ENCODE measurements at regions of chr4 and their contacts with region 1.

Region 1: DNA sequence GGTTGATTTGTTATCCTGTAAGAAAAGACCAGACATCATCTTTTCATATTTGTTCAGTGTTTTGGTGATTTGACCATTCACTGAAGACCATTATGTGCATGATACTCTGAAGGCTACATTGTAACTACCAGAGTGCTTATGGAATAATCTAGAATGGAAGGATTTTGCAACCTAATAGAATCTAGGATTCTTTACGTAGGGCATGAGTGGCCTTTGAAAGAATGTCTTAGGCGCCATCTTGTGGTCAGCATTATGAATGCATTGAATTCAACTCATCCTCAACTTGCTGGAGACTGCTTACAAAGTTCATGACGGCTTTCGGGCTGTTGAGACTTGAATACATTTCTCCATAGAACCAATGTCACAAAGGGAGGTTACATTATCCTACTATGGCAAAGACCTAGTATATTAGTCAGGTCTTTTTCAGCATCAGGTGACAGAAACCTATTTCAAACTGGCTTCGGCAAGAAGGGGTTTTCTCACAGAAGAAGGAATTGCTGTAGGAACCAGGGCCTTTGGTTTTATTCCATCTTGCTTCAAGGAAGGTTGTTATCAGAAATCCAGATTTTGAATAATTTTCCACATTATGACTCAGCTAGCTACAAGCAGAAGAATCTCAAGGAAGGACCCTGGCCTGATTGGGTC is 104.1 kb downstream of the GPAT3 start:
- DNase-seq: peak; percentile 78
- H3K4me3 ChIP-seq: no peak overlapping the region
- H3K27ac ChIP-seq: no peak overlapping the region
- H3K4me1 ChIP-seq: no peaks in the 10 kb centered on the region
- H3K27me3 ChIP-seq: peaks cover 13 to 22% of the 10 kb centered on the region in 2 experiments
- CTCF ChIP-seq: peak; percentile 59 to 66
- POLR2A ChIP-seq: no peak

Region 2: GRCh38 chr4:83362492-83363329 is 277.3 kb before region 1 on chr4:
- CTCF ChIA-PET with region 1: interaction called, 3 read pairs
- POLR2A ChIA-PET with region 1: no interaction called
- dilution Hi-C with region 1: no loop called
- intact Hi-C with region 1: loop called (anchors 1 kb)
- DNase-seq: peak; percentile 61
- H3K4me3 ChIP-seq: no peak overlapping the region
- H3K27ac ChIP-seq: no peak overlapping the region
- H3K4me1 ChIP-seq: peaks cover 13% of the 10 kb centered on the region
- H3K27me3 ChIP-seq: no peaks in the 10 kb centered on the region
- CTCF ChIP-seq: peak; percentile 35 to 44
- POLR2A ChIP-seq: no peak

Region 3: DNA sequence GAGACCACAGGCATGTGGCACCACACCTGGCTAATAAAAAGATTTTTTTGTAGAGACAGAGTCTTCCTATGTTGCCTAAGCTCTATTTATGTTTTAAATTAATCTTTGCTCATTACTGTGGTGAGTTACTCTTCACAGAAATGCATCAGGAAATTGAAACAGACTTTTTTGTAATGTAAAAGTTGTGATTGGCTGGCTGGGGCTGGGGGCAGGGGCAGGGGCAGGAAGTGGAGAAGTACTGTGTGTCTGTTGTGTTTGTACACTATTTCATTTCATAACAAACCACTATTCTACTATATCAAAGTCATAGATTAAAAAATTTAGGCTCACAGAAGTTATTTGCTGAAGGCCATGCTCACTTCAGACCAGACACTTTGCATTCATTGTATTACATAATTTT is 136.0 kb before region 1 on chr4:
- CTCF ChIA-PET with region 1: interaction called, 81 read pairs
- POLR2A ChIA-PET with region 1: no interaction called
- dilution Hi-C with region 1: no loop called
- intact Hi-C with region 1: loop called (anchors 1 kb)
- DNase-seq: no peak
- H3K4me3 ChIP-seq: no peak overlapping the region
- H3K27ac ChIP-seq: no peak overlapping the region
- H3K4me1 ChIP-seq: no peaks in the 10 kb centered on the region
- H3K27me3 ChIP-seq: peaks cover 0 to 2% of the 10 kb centered on the region in 2 experiments
- CTCF ChIP-seq: no peak
- POLR2A ChIP-seq: no peak

Region 4: DNA sequence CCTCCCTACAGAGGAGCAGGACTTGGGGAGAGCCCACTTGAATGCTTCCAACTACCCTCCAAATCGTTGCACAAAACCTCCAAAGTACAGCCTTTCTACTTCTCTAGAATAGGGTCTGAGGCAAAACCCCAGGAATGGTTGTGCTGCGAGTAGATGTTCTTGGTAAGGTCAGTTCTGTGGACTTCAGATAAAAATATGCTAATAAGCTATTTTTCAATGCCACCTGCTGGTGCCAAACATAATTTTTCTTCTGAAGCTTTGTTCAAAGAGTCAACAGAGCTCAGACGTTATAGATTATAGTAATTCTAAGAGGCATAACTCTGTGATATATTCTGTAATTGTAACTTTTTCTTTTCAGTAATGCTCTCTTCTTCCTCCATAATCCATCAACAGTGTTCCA is 321.6 kb after region 1 on chr4:
- CTCF ChIA-PET with region 1: interaction called, 18 read pairs
- POLR2A ChIA-PET with region 1: no interaction called
- dilution Hi-C with region 1: no loop called
- intact Hi-C with region 1: no loop called
- DNase-seq: no peak
- H3K4me3 ChIP-seq: no peak overlapping the region
- H3K27ac ChIP-seq: no peak overlapping the region
- H3K4me1 ChIP-seq: no peaks in the 10 kb centered on the region
- H3K27me3 ChIP-seq: no peaks in the 10 kb centered on the region
- CTCF ChIP-seq: no peak
- POLR2A ChIP-seq: no peak

Region 5: DNA sequence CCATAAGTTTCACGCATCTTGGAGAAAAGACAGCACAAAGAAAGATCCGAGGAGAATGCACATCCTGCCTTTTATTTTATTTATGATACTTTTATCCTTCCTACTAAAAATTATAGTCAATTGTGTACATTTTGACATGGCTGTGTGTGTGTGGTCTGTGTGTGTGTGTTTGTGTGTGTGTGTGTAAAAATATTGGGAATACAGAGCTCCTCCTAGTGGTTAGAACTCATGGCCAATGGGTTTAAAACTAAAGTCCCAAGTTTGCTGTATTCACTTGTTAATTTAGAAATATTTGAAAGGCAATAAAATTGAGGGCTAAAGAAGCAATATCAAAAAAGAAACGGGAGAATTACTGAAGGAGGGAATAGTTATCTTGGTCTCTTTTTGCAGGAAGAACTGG is 811.6 kb after region 1 on chr4:
- CTCF ChIA-PET with region 1: interaction called, 51 read pairs
- POLR2A ChIA-PET with region 1: no interaction called
- dilution Hi-C with region 1: no loop called
- intact Hi-C with region 1: loop called (anchors 2 kb)
- DNase-seq: peak; percentile 4
- H3K4me3 ChIP-seq: no peak overlapping the region
- H3K27ac ChIP-seq: no peak overlapping the region
- H3K4me1 ChIP-seq: no peaks in the 10 kb centered on the region
- H3K27me3 ChIP-seq: peaks cover 0 to 2% of the 10 kb centered on the region in 2 experiments
- CTCF ChIP-seq: peak; percentile 17 to 24
- POLR2A ChIP-seq: no peak

Region 6: GRCh38 chr4:84529169-84529751 is 889.3 kb after region 1 on chr4:
- CTCF ChIA-PET with region 1: interaction called, 29 read pairs
- POLR2A ChIA-PET with region 1: no interaction called
- dilution Hi-C with region 1: no loop called
- intact Hi-C with region 1: no loop called
- DNase-seq: peak; percentile 29
- H3K4me3 ChIP-seq: no peak overlapping the region
- H3K27ac ChIP-seq: no peak overlapping the region
- H3K4me1 ChIP-seq: no peaks in the 10 kb centered on the region
- H3K27me3 ChIP-seq: peaks cover 0 to 9% of the 10 kb centered on the region in 2 experiments
- CTCF ChIP-seq: peak; percentile 36 to 48
- POLR2A ChIP-seq: no peak